MCF 10A (cell line): ENCODE measurements at regions of chr16 and their contacts with region 1.

Region 1: GRCh38 chr16:71883849-71884638 is at the start of gene ZNF821:
- DNase-seq: peak; percentile 56
- H3K4me3 Mint-ChIP-seq: peak within 1 kb of the TSS; percentile 86
- H3K27ac Mint-ChIP-seq: peak within 1 kb of the TSS; percentile 49
- H3K4me1 Mint-ChIP-seq: peaks cover 9% of the 10 kb centered on the region
- H3K27me3 Mint-ChIP-seq: no peaks in the 10 kb centered on the region
- CTCF ChIP-seq: peak; percentile 46
- total RNA-seq, gene ZNF821: 3.4 and 4.4 TPM in 2 replicates

Region 2: GRCh38 chr16:71870818-71871217 is 13.2 kb before region 1 on chr16:
- CTCF ChIA-PET with region 1: interaction called, 17 read pairs
- POLR2A ChIA-PET with region 1: interaction called, 13 read pairs
- intact Hi-C with region 1: no loop called
- DNase-seq: no peak
- H3K4me3 Mint-ChIP-seq: no peak overlapping the region
- H3K27ac Mint-ChIP-seq: no peak overlapping the region
- H3K4me1 Mint-ChIP-seq: no peaks in the 10 kb centered on the region
- H3K27me3 Mint-ChIP-seq: no peaks in the 10 kb centered on the region
- CTCF ChIP-seq: no peak